Prostate gland (tissue), 2 donors: ENCODE measurements at regions of chr9 and their contacts with region 1.

Region 1: DNA sequence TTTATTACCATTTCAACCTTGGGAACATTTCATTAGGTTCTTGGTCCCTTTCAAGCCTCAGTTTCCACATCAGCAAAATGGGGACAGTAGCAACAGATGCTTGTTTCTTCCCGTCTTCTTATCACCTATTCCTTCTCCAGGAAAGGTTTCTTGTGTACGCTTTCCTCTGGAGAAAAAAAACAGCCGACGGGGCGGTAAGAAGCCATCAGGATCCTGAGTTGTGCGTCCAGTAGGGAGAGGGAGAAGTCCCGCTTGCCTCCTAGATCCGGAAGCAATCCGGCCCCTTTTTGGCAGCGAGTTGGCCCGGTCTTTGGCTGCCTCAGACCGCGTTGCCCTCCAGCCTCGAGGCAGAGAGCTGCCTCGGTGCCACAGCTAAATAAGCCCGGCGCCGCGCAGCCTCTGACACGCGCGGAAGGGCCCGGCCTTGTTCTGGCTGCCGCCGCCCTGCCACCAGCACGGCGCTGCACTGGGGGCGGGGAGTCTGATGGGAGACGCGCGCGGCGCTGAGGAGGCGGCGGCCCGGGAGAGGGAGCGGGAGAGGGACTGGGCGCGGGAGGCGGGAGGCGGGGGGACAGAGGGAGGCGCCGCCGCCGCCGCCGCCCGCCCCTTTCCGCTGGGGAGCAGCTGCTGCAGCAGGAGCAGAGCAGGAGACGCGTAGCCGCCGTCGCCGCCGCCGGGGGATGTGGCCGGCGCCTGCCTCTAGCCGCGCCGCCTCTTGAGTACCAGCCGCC is at the start of gene SLC44A1:
- DNase-seq: peak; percentile 96
- H3K4me3 ChIP-seq: peak within 1 kb of the TSS; percentile 60 to 81
- H3K27ac ChIP-seq: peak within 1 kb of the TSS; percentile 85 to 88
- H3K4me1 ChIP-seq: no peaks in the 10 kb centered on the region
- H3K27me3 ChIP-seq: no peaks in the 10 kb centered on the region
- CTCF ChIP-seq: peak in 2 of 4 experiments; percentile 29 to 34
- POLR2A ChIP-seq: peak; percentile 67
- total RNA-seq, gene SLC44A1: 22.2 to 27.1 TPM

Region 2: GRCh38 chr9:104658496-104659195 is 585.5 kb before region 1 on chr9:
- intact Hi-C with region 1: no loop called
- DNase-seq: no peak
- H3K4me3 ChIP-seq: no peak overlapping the region
- H3K27ac ChIP-seq: no peak overlapping the region
- H3K4me1 ChIP-seq: no peaks in the 10 kb centered on the region
- H3K27me3 ChIP-seq: no peaks in the 10 kb centered on the region
- CTCF ChIP-seq: no peak
- POLR2A ChIP-seq: no peak

Region 3: DNA sequence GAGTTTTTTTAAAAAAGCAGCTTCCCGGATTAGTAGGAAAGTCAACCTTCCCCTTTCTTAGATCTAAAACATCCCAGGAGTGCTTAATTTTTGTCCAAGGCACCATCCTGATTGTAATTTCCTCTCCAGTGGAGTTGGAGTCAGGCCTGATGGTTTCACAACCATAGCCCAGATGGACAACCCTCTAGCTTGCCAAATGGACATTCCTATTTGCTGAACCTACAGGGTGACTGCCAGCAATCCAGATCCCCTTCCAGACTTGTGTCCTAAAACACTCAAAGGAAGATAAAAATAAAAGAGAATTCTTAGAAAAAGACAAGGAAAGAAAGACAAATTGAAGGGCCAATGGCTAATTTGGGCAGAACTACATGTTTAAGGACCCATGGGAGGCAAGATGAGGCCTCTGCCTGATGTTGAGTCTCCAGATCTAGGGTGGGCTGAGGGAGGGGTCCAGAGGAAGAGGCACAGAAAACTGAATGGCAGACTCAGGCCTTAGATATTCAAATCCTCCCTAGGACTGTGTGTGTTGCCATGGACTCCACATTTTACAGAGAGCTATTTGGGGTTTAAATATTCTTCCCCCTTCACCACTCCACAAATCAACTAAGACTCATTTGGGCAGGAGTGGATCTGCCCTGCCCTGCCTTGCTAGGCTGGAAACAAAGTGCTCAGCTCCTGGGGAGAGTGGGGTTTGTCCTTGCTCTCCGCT is 38.2 kb before region 1 on chr9:
- intact Hi-C with region 1: loop called (anchors 5 kb)
- DNase-seq: no peak
- H3K4me3 ChIP-seq: no peak overlapping the region
- H3K27ac ChIP-seq: no peak overlapping the region
- H3K4me1 ChIP-seq: no peaks in the 10 kb centered on the region
- H3K27me3 ChIP-seq: no peaks in the 10 kb centered on the region
- CTCF ChIP-seq: no peak
- POLR2A ChIP-seq: no peak

Region 4: DNA sequence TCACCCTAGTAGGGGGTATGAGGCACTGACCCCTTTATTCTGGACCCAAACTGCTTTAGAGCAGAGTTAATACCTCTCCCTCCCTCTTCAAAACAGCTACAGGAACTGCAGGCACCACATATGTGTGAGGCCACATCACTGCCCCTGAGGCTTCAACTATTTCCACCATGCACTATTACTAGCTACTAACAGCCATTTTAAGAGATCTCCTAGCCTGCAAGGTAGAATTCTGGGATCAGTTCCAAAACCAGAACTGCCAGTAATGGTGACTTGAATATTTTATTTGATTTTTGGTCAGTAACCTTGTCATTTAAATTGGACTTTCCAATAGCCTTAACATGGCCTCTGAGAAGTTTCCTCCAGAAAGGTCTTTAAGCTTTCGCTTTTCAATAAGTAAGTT is 148.4 kb after region 1 on chr9:
- intact Hi-C with region 1: loop called (anchors 10 kb)
- DNase-seq: no peak
- H3K4me3 ChIP-seq: no peak overlapping the region
- H3K27ac ChIP-seq: no peak overlapping the region
- H3K4me1 ChIP-seq: no peaks in the 10 kb centered on the region
- H3K27me3 ChIP-seq: no peaks in the 10 kb centered on the region
- CTCF ChIP-seq: no peak
- POLR2A ChIP-seq: no peak